OCI-LY7 (cell line): ENCODE measurements at regions of chr3 and their contacts with region 1.

Region 1: DNA sequence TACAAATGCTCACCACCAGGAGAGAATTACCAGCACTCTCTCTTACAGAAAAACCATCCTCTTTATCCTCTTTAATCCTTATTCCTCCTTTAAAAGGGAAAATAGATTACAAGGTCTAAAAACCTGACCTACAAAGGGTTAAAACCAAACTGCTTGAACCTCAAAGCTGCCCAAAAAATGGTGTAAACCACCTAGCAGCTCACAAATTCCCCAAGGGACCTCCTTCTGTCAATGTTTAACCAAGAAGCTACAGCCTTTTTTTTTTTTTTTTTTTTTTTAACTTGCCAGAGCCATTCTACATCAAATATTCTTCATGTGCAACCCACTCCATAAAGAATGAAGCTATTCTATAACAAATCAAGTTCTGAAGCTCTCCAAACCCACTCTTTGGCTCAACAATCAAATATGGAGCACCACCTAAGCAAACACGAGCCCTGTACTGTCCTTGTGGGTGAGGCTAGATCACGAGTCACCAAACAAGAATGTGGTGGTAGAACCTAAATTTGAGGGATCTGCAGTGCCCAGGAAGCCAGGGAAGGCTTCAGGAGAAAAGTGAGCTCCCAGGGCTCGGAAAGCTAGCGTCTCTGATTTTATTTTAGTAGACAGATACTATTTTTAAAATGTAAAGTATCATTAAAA is 20.1 kb downstream of the OSBPL10 start:
- DNase-seq: peak; percentile 85
- H3K4me3 ChIP-seq: peak overlapping the region; percentile 65
- H3K27ac ChIP-seq: peak overlapping the region; percentile 91
- H3K4me1 ChIP-seq: peaks cover 82% of the 10 kb centered on the region
- CTCF ChIP-seq: no peak

Region 2: GRCh38 chr3:31918179-31919168 is 42.4 kb before region 1 on chr3:
- CTCF ChIA-PET with region 1: interaction called, 3 read pairs
- POLR2A ChIA-PET with region 1: interaction called, 10 read pairs
- intact Hi-C with region 1: no loop called
- DNase-seq: peak; percentile 65
- H3K4me3 ChIP-seq: peak overlapping the region; percentile 64
- H3K27ac ChIP-seq: peak overlapping the region; percentile 100
- H3K4me1 ChIP-seq: peaks cover 99% of the 10 kb centered on the region
- CTCF ChIP-seq: no peak

Region 3: GRCh38 chr3:31974471-31974870 is 13.6 kb after region 1 on chr3:
- CTCF ChIA-PET with region 1: interaction called, 5 read pairs
- POLR2A ChIA-PET with region 1: interaction called, 76 read pairs
- intact Hi-C with region 1: no loop called
- DNase-seq: no peak
- H3K4me3 ChIP-seq: peak overlapping the region; percentile 91
- H3K27ac ChIP-seq: peak overlapping the region; percentile 88
- H3K4me1 ChIP-seq: peaks cover 100% of the 10 kb centered on the region
- CTCF ChIP-seq: no peak

Region 4: DNA sequence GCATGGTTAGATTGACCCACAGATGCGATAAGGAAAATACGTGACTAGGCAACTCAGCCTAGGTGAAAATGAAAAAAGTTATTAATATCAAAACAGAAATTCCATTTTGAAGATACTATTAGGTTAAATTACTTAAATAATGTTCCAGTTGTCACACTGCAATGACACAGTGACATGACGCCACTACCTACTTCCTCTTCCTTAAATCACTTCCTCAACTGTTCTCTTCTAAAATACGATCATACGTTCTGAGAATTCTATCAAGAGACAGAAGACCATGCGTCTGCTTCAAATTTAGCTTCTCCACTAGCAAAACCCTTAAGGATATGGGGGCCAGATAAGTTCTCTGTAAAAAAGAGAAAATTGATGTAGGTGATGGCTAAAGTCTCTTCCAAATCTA is 523.5 kb after region 1 on chr3:
- CTCF ChIA-PET with region 1: no interaction called
- POLR2A ChIA-PET with region 1: no interaction called
- intact Hi-C with region 1: no loop called
- DNase-seq: peak; percentile 24
- H3K4me3 ChIP-seq: no peak overlapping the region
- H3K27ac ChIP-seq: no peak overlapping the region
- H3K4me1 ChIP-seq: peaks cover 14% of the 10 kb centered on the region
- CTCF ChIP-seq: no peak